ENCODE measurements at regions of chr20 and their contacts with region 1.

Region 1: GRCh38 chr20:44747166-44748004 is 1.7 kb downstream of the KCNK15 start:
- DNase-seq: peak; percentile 23 to 68 (median 56)
- ATAC-seq: peak; percentile 59
- H3K4me3 ChIP-seq: no peak overlapping the region
- H3K4me3 Mint-ChIP-seq: peak overlapping the region; percentile 51
- H3K27ac ChIP-seq: no peak overlapping the region
- H3K27ac Mint-ChIP-seq: no peak overlapping the region
- H3K4me1 ChIP-seq: peaks cover 8% of the 10 kb centered on the region
- H3K4me1 Mint-ChIP-seq: peaks cover 11% of the 10 kb centered on the region
- H3K27me3 ChIP-seq: peaks cover 5 to 6% of the 10 kb centered on the region in 2 experiments
- H3K27me3 Mint-ChIP-seq: peaks cover 38% of the 10 kb centered on the region
- CTCF ChIP-seq: peak; percentile 47

Region 2: DNA sequence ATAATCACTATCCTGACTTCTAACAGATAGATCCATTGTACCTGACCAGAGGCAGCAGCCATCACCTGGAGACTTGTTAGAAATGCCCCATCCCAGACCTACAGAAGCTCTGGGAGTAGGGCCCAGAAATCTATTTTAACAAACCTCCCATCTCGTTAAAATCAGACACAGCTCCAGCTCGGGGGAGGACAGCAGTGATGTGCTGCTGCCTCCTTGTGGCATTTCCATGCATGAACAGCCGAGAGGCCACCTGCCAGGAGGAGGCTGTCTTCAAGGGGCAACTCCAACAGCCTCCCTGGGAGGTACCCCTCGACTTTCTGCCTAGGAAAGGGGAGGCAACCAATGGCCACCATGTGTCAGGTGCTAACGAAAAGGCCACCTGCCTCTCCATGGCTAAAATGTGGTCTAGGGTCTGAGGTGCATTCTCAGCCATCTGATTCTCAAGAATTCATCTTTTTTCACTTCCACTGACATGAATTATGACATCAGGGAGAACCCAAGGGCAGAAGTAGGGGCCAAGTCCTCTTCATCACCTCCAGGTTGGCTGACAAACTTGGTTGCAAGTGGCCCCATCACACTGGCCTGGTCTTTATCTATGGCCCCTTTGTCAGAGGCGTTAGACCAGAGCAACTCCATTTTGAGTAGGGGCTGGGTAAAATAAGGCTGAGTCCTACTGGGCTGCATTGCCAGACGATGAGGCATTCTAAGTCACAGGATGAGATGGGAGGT is 13.9 kb before region 1 on chr20:
- CTCF ChIA-PET with region 1: interaction called, 11 read pairs
- POLR2A ChIA-PET with region 1: no interaction called
- intact Hi-C with region 1: no loop called
- DNase-seq: peak; percentile 29 to 78 (median 56)
- ATAC-seq: peak; percentile 85
- H3K4me3 ChIP-seq: no peak overlapping the region
- H3K4me3 Mint-ChIP-seq: no peak overlapping the region
- H3K27ac ChIP-seq: no peak overlapping the region
- H3K27ac Mint-ChIP-seq: no peak overlapping the region
- H3K4me1 ChIP-seq: peaks cover 7% of the 10 kb centered on the region
- H3K4me1 Mint-ChIP-seq: peaks cover 14% of the 10 kb centered on the region
- H3K27me3 ChIP-seq: no peaks in the 10 kb centered on the region
- H3K27me3 Mint-ChIP-seq: no peaks in the 10 kb centered on the region
- CTCF ChIP-seq: peak; percentile 71

Region 3: GRCh38 chr20:44866703-44867335 is 119.4 kb after region 1 on chr20:
- CTCF ChIA-PET with region 1: interaction called, 16 read pairs
- POLR2A ChIA-PET with region 1: no interaction called
- intact Hi-C with region 1: loop called (anchors 1 kb)
- DNase-seq: no peak
- ATAC-seq: no peak
- H3K4me3 ChIP-seq: no peak overlapping the region
- H3K4me3 Mint-ChIP-seq: peak overlapping the region; percentile 65
- H3K27ac ChIP-seq: no peak overlapping the region
- H3K27ac Mint-ChIP-seq: no peak overlapping the region
- H3K4me1 ChIP-seq: peaks cover 7% of the 10 kb centered on the region
- H3K4me1 Mint-ChIP-seq: peaks cover 15% of the 10 kb centered on the region
- H3K27me3 ChIP-seq: no peaks in the 10 kb centered on the region
- H3K27me3 Mint-ChIP-seq: peaks cover 6% of the 10 kb centered on the region
- CTCF ChIP-seq: no peak

Measured in CD8-positive, alpha-beta T cell (primary cell).